Mammary epithelial cell (primary cell): ENCODE measurements at regions of chr21 and their contacts with region 1.

Region 1: DNA sequence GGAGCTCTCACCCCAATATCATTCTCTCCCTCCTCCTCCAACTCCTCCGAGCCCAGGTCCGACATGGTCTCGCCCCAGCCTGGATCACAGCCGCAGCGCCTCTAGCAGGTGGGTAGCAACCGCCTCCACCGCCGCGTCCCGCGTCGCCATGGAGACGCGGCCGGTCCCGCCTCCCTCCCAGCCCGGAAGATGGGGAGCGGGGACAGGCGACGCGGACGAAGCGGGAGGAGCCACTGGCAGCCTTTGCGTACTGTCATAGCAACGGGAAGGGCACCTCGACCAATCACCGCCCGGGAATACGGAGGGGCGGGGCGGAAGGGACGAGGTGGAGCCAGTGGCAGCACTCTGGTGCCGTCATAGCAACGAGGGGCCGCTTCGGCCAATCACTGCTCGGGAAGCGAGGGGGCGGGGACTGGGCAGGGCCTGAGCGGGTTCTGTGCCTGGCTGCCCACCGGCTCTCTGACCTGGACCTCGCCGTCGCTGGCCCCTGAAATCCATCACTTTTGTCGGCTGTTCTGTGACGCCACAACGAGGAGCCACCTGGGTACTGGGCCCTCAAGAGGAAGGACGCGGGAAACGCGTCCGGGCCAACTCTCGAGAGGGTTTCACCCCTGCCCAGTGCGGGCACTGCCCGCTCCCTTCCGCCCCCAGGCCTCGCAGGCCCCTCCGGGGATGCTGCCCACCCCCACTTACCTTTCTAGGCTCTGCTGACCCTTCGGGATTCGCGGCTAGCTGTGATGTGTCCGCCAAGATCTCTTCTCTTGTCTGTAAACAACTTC is at the start of gene RSPH1:
- DNase-seq: peak; percentile 99
- H3K4me3 ChIP-seq: peak within 1 kb of the TSS; percentile 68 to 89 (median 81)
- H3K27ac ChIP-seq: peak within 1 kb of the TSS; percentile 80
- H3K4me1 ChIP-seq: peaks cover 11% of the 10 kb centered on the region
- H3K27me3 ChIP-seq: no peaks in the 10 kb centered on the region
- CTCF ChIP-seq: no peak
- total RNA-seq, gene RSPH1: 0.50 to 0.66 TPM

Region 2: GRCh38 chr21:42440187-42440792 is 56.0 kb before region 1 on chr21:
- CTCF ChIA-PET with region 1: no interaction called
- dilution Hi-C with region 1: no loop called
- in situ Hi-C with region 1: no loop called
- intact Hi-C with region 1: no loop called
- DNase-seq: no peak
- H3K4me3 ChIP-seq: no peak overlapping the region
- H3K27ac ChIP-seq: no peak overlapping the region
- H3K4me1 ChIP-seq: no peaks in the 10 kb centered on the region
- H3K27me3 ChIP-seq: no peaks in the 10 kb centered on the region
- CTCF ChIP-seq: no peak

Region 3: DNA sequence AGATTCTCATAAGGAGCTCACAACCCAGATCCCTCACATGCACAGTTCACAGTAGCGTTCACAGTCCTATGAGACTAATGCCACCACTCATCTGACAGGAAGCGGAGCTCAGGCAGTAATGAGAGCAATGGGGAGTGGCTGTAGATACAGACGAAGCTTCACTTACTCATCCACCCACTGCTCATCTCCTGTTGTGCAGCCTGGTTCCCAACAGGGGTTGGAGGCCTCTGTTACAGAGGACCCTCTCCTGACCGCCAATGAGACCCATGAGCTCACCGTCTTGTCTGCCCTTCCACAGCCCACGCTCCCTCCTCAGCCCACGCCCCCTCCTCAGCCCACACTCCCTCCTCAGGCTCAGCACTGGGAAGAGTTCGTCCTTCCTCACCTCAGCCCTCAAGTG is 39.9 kb before region 1 on chr21:
- CTCF ChIA-PET with region 1: no interaction called
- dilution Hi-C with region 1: loop called (anchors 5 kb)
- in situ Hi-C with region 1: no loop called
- intact Hi-C with region 1: no loop called
- DNase-seq: peak; percentile 10
- H3K4me3 ChIP-seq: no peak overlapping the region
- H3K27ac ChIP-seq: no peak overlapping the region
- H3K4me1 ChIP-seq: no peaks in the 10 kb centered on the region
- H3K27me3 ChIP-seq: no peaks in the 10 kb centered on the region
- CTCF ChIP-seq: no peak

Region 4: GRCh38 chr21:42513985-42514882 is 17.9 kb after region 1 on chr21:
- CTCF ChIA-PET with region 1: no interaction called
- dilution Hi-C with region 1: no loop called
- in situ Hi-C with region 1: no loop called
- intact Hi-C with region 1: loop called (anchors 2 kb)
- DNase-seq: peak; percentile 39
- H3K4me3 ChIP-seq: peak overlapping the region; percentile 66 to 72 (median 70)
- H3K27ac ChIP-seq: peak overlapping the region; percentile 48
- H3K4me1 ChIP-seq: peaks cover 27% of the 10 kb centered on the region
- H3K27me3 ChIP-seq: no peaks in the 10 kb centered on the region
- CTCF ChIP-seq: no peak

Region 5: DNA sequence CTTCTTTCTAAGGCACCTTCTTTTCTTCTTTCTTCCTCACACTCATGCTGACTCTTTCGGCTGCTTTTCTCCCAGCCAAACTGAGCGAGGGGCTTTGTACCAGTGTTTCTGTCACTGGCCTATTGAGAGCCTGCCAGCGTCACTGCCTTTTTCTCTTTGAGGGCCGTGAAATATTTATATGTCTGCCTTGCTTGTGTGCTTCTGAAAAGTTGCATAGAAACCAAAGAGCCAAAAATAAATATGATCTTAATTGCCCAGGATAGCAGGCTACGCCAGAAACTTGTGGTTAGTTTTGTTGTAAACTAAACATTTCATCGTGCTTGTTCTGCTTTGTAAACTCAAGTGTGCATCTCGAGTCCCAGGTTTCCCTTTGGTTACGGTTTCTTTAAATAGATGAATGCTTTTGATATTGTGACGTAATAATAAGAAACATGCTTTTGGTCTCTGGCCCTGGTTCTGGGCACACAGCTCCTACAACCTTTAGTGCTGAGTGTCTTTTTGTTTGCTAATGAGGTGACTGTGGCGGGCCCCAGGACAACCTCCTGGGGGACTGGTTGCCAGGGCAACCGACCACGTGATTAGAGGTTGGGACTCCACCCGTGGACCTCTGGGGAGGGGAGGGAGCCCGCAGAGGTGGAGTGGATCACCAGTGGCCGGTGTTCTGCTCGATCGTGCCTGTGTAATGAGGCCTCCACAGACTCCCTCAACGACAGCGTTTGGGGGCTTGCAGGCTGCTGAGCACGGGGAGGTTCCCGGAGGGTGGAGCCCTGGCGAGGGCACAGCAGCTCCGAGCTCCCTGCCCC is 28.2 kb after region 1 on chr21:
- CTCF ChIA-PET with region 1: no interaction called
- dilution Hi-C with region 1: loop called (anchors 5 kb)
- in situ Hi-C with region 1: no loop called
- intact Hi-C with region 1: no loop called
- DNase-seq: no peak
- H3K4me3 ChIP-seq: peak overlapping the region in 1 of 3 experiments; percentile 16
- H3K27ac ChIP-seq: peak overlapping the region; percentile 25
- H3K4me1 ChIP-seq: peaks cover 13% of the 10 kb centered on the region
- H3K27me3 ChIP-seq: no peaks in the 10 kb centered on the region
- CTCF ChIP-seq: no peak

Region 6: DNA sequence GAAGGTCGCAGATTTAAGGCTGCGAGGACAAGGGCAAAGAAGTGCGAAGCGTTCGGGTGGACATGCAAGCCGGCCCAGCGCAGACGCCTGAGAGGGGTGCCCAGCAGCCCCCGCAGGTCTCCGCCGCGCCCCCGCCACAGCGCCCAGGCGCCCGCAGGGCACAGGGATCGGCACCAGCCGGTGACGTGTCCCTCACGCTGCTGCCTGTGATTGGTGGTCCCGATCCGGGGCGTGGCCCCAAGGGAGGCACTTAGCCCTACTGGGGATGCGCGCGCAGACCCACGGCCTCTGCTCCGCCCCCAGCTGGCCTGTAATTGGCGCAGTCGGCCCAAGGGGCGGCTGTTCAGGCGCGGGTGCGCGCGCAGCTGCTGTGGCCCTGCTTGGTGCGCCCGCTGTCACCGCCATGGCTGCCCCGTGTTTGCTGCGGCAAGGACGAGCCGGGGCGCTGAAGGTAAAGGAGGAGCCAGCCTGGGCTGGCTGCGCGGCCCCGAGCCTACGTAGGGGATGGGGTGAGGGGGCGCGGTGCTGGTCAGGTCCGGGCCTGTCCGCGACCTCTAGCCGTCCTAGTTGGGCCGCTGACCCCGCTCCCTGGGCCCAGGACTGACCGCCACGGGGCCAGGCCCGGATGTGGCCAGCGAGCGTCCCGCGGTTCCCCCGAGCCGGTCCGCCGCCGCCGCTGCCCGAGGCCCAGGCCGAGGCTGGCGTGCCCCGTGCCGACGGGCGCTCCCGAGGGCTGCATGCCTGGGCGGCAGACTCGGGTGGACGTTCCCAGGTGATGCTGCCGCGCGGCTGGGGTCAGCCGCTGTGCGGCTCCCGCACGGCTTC is 396.8 kb after region 1 on chr21 and contains the start of gene NDUFV3:
- CTCF ChIA-PET with region 1: no interaction called
- dilution Hi-C with region 1: no loop called
- in situ Hi-C with region 1: no loop called
- intact Hi-C with region 1: loop called (anchors 5 kb)
- DNase-seq: peak; percentile 98
- H3K4me3 ChIP-seq: peak within 1 kb of the TSS; percentile 74 to 88 (median 76)
- H3K27ac ChIP-seq: peak within 1 kb of the TSS; percentile 97
- H3K4me1 ChIP-seq: peaks cover 8% of the 10 kb centered on the region
- H3K27me3 ChIP-seq: no peaks in the 10 kb centered on the region
- CTCF ChIP-seq: no peak
- total RNA-seq, gene NDUFV3: 36.3 to 50.3 TPM